ENCODE measurements at regions of chr17 and their contacts with region 1.

Region 1: GRCh38 chr17:17041571-17042380 is 481 bp upstream of the MPRIP start:
- DNase-seq: peak; percentile 97 to 100 (median 99)

Region 2: GRCh38 chr17:17075038-17075781 is 33.4 kb after region 1 on chr17:
- intact Hi-C with region 1: no loop called
- DNase-seq: peak in 3 of 10 donors; percentile 58 to 74 (median 67)

Region 3: GRCh38 chr17:17125136-17126084 is 83.6 kb after region 1 on chr17:
- intact Hi-C with region 1: no loop called
- DNase-seq: peak in 5 of 10 donors; percentile 5 to 63 (median 54)

Region 4: DNA sequence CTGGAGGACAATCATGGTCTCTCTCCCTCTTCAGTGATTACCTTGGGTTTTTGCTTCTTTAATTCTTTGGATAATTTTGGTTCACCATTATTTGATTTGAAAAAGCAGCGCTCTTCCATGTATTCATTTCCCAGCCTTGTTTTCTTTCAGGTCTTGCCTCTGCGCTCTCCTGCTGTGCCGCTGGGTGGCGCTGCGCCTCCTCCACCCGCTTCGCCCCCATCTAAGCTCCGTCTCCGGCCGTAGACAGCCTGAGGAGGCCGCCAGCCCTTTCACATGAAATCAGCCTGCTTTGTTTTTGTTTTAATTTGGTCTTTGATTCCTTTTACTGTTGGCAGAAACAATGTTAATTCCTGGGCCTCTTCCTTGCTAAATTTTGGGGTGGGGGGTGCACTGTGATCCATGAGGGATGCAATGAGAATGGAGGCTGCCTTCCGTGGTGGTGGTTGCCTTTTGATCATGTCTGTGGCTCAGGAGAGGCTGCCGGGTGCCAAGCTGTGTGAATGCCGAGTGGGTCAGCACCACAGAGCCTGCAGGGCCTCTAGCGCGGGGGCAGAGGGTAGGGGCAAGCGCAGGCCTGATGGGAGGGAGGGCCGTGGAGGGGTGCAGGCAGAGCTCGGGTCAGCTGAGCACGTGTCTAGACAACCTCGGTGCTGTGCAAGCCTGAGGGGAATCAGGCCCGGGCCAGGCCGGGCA is 100.2 kb after region 1 on chr17:
- intact Hi-C with region 1: loop called (anchors 5 kb)
- DNase-seq: peak; percentile 69 to 97 (median 80)